Mammary epithelial cell (primary cell): ENCODE measurements at regions of chr2 and their contacts with region 1.

Region 1: GRCh38 chr2:181790716-181791649 is 100.5 kb upstream of the ITPRID2 start:
- DNase-seq: peak; percentile 97
- H3K4me3 ChIP-seq: no peak overlapping the region
- H3K27ac ChIP-seq: peak overlapping the region; percentile 99
- H3K4me1 ChIP-seq: peaks cover 56% of the 10 kb centered on the region
- H3K27me3 ChIP-seq: no peaks in the 10 kb centered on the region
- CTCF ChIP-seq: no peak

Region 2: GRCh38 chr2:181810823-181811695 is 20.1 kb after region 1 on chr2:
- CTCF ChIA-PET with region 1: no interaction called
- dilution Hi-C with region 1: no loop called
- in situ Hi-C with region 1: no loop called
- intact Hi-C with region 1: loop called (anchors 1 kb)
- DNase-seq: peak; percentile 97
- H3K4me3 ChIP-seq: no peak overlapping the region
- H3K27ac ChIP-seq: peak overlapping the region; percentile 59
- H3K4me1 ChIP-seq: peaks cover 24% of the 10 kb centered on the region
- H3K27me3 ChIP-seq: no peaks in the 10 kb centered on the region
- CTCF ChIP-seq: no peak

Region 3: DNA sequence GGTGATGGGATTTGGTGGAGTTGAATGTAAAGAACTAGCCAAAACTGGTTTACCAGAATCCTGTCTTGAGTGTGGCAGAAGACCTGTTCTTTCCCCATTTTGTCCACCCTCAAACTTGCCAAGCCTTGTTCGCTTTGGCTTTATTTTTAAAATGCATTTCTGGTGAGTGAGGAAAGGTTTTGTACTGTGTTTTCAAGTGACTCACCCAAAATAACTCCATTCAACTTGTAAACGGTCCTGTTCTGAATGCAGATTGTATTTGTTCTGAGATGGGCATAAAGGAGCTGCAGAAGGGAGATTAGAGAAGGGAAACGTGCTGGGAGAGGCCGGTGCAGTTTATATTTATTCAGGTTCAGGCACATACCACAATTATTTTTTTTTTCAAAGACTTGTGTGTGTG is 95.2 kb after region 1 on chr2:
- CTCF ChIA-PET with region 1: no interaction called
- dilution Hi-C with region 1: loop called (anchors 5 kb)
- in situ Hi-C with region 1: no loop called
- intact Hi-C with region 1: no loop called
- DNase-seq: peak; percentile 61
- H3K4me3 ChIP-seq: no peak overlapping the region
- H3K27ac ChIP-seq: no peak overlapping the region
- H3K4me1 ChIP-seq: peaks cover 17% of the 10 kb centered on the region
- H3K27me3 ChIP-seq: no peaks in the 10 kb centered on the region
- CTCF ChIP-seq: no peak

Region 4: DNA sequence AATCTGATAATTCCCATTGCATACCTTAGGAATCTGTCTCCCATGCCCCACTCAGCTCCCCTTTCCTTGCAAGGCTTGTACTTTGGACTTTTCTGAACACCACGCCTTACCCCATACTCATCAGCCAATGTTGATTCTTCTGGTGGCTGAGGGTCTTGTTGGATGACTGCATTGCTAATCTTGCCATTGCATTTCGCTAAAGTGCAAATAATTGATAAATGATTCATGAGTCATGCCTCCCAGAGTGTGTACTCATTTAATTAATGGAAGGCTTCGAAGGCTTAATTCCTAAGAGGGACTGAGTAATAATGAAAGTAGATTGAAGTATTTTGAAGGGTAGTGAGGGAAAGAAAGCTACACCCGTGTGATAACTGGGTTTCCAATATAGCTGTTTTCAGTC is 166.7 kb after region 1 on chr2:
- CTCF ChIA-PET with region 1: no interaction called
- dilution Hi-C with region 1: no loop called
- in situ Hi-C with region 1: no loop called
- intact Hi-C with region 1: no loop called
- DNase-seq: no peak
- H3K4me3 ChIP-seq: no peak overlapping the region
- H3K27ac ChIP-seq: no peak overlapping the region
- H3K4me1 ChIP-seq: peaks cover 21% of the 10 kb centered on the region
- H3K27me3 ChIP-seq: no peaks in the 10 kb centered on the region
- CTCF ChIP-seq: no peak